ENCODE measurements at regions of chr4 and their contacts with region 1.

Region 1: DNA sequence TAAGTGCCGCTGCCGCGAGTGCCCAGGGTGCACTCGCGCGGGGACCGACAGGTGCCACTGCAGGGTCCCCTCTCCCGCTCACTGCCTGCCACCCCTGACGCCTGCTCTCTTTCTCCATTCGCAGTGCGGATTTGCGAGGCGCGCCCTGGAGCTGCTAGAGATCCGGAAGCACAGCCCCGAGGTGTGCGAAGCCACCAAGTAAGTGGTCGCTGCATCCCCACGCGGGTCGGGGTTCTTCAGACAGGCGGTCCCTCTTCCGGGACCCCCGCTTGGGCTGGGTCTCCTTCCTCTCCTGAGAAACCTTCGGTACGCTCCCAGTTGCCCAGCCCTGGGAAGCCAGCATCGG is 547 bp downstream of the GUCY1A1 start:
- DNase-seq: no peak
- ATAC-seq: peak; percentile 68
- H3K4me3 ChIP-seq: peak overlapping the region; percentile 37 to 49
- H3K27ac ChIP-seq: no peak overlapping the region
- H3K4me1 ChIP-seq: no peaks in the 10 kb centered on the region
- H3K27me3 ChIP-seq: peaks cover 7% of the 10 kb centered on the region; the same call in 1 of the 2 replicates
- CTCF ChIP-seq: no peak

Region 2: GRCh38 chr4:155419266-155419665 is 247.9 kb before region 1 on chr4:
- CTCF ChIA-PET with region 1: interaction called, 10 read pairs
- POLR2A ChIA-PET with region 1: no interaction called
- in situ Hi-C with region 1: no loop called
- intact Hi-C with region 1: no loop called
- DNase-seq: no peak
- ATAC-seq: no peak
- H3K4me3 ChIP-seq: no peak overlapping the region
- H3K27ac ChIP-seq: no peak overlapping the region
- H3K4me1 ChIP-seq: no peaks in the 10 kb centered on the region
- H3K27me3 ChIP-seq: no peaks in the 10 kb centered on the region
- CTCF ChIP-seq: no peak

Measured in Panc1 (cell line).